H1 (cell line): ENCODE measurements at regions of chr16 and their contacts with region 1.

Region 1: DNA sequence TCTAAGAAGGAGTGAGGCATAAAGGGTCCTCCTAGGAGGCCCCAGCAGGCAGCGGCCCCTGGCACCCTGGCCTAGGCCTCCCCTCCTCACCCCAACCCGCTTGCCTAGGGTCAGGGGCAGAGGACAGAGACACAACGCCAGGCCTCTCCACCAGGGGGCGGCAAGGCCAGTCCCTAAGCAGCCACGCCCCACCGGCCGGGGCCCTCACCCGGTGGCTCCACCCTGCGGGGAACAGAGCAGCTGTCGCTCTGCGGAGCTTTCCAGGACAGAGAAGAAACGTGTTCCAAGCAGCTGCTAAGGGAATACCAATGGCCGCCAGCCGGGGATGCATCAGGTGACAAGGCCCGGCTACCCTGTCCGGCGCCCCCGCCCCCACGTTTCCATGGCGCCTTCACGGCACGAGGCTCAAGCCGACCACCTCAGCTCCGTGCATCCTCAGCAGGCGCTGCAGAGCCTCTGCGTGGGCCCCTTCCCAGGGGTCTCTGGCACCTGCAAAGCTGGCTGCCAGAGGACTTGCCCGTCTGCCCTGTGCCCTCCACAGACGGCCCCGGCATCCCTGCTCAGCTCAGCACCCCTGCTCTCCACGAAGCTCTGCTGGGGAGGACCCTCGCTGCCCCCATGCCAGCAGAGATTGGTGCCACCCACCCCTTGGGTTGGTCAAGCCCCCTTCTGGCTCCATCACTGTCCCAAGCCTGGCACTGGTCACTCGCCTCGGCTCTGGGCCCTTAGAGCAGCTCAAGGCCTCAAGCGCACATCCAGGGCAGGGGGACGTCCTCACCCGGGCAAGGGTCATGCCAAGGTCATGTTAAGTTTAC is 5.6 kb downstream of the ZNF598 start:
- DNase-seq: peak; percentile 90 to 99
- H3K4me3 ChIP-seq: peak overlapping the region in 2 of 4 experiments; percentile 14 to 33; a peak in 3 of 8 replicates
- H3K27ac ChIP-seq: peak overlapping the region; percentile 53; the same call in 1 of the 2 replicates
- H3K4me1 ChIP-seq: peaks cover 0 to 33% (median 18%) of the 10 kb centered on the region in 4 experiments; a peak in 5 of 7 replicates
- H3K27me3 ChIP-seq: no peaks in the 10 kb centered on the region
- CTCF ChIP-seq: peak in 2 of 3 experiments; percentile 98 to 99; a peak in 3 of 4 replicates
- EP300 ChIP-seq: peak in 1 of 2 experiments; percentile 12; a peak in 1 of 3 replicates
- POLR2A ChIP-seq: no peak
- RAD21 ChIP-seq: peak; percentile 55 to 62

Region 2: GRCh38 chr16:1991948-1992703 is 11.9 kb before region 1 on chr16:
- CTCF ChIA-PET with region 1: interaction called, 55 read pairs
- POLR2A ChIA-PET with region 1: interaction called, 15 read pairs
- DNase-seq: peak; percentile 85 to 98
- H3K4me3 ChIP-seq: peak overlapping the region; percentile 46 to 82 (median 48)
- H3K27ac ChIP-seq: peak overlapping the region; percentile 81; the same call in 1 of the 2 replicates
- H3K4me1 ChIP-seq: peaks cover 0 to 24% (median 18%) of the 10 kb centered on the region in 4 experiments; a peak in 6 of 7 replicates
- H3K27me3 ChIP-seq: peaks cover 4 to 37% (median 24%) of the 10 kb centered on the region in 4 experiments
- CTCF ChIP-seq: no peak
- EP300 ChIP-seq: no peak
- POLR2A ChIP-seq: peak in 1 of 2 experiments; percentile 88; a peak in 2 of 3 replicates
- RAD21 ChIP-seq: no peak

Region 3: DNA sequence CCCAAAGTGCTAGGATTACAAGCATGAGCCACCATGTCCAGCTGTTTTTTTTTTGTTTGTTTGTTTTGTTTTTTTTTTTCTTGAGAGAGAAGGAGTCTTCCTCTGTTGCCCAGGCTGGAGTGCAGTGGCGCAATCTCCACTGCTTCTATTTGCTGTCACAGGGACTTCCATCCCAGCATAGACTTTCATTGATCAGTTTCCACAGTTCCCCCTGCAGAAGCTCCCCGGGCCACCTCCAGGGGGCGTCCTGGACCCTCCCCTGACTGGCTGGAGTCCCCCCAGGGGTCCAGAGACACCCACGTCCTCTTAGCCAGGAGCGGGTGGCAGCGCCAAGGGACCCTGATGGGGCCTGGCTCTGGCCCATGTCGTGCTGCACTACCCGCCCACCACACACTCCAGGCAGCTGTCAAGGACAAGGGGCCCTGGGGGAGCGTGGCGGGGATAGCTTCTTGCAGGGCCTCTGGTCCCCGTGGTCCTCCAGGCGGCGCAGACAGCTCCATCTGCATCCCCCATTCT is 12.4 kb after region 1 on chr16:
- CTCF ChIA-PET with region 1: interaction called, 55 read pairs
- POLR2A ChIA-PET with region 1: interaction called, 7 read pairs
- DNase-seq: peak in 1 of 2 experiments; percentile 79
- H3K4me3 ChIP-seq: no peak overlapping the region
- H3K27ac ChIP-seq: no peak overlapping the region
- H3K4me1 ChIP-seq: peaks cover 0 to 15% (median 2%) of the 10 kb centered on the region in 4 experiments; a peak in 4 of 7 replicates
- H3K27me3 ChIP-seq: peaks cover 20 to 34% (median 26%) of the 10 kb centered on the region in 4 experiments
- CTCF ChIP-seq: peak; percentile 57 to 67 (median 58)
- EP300 ChIP-seq: no peak
- POLR2A ChIP-seq: no peak
- RAD21 ChIP-seq: peak; percentile 30 to 45; a peak in 3 of 4 replicates

Region 4: GRCh38 chr16:2023098-2023925 is 19.3 kb after region 1 on chr16:
- CTCF ChIA-PET with region 1: interaction called, 55 read pairs
- POLR2A ChIA-PET with region 1: interaction called, 7 read pairs
- DNase-seq: peak; percentile 71 to 100
- H3K4me3 ChIP-seq: peak overlapping the region; percentile 21 to 59 (median 32); a peak in 6 of 8 replicates
- H3K27ac ChIP-seq: no peak overlapping the region
- H3K4me1 ChIP-seq: peaks cover 0 to 27% (median 13%) of the 10 kb centered on the region in 4 experiments; a peak in 5 of 7 replicates
- H3K27me3 ChIP-seq: peaks cover 22 to 59% (median 52%) of the 10 kb centered on the region in 4 experiments
- CTCF ChIP-seq: peak in 2 of 3 experiments; percentile 92 to 99; a peak in 3 of 4 replicates
- EP300 ChIP-seq: no peak
- POLR2A ChIP-seq: no peak
- RAD21 ChIP-seq: peak; percentile 92 to 93

Region 5: DNA sequence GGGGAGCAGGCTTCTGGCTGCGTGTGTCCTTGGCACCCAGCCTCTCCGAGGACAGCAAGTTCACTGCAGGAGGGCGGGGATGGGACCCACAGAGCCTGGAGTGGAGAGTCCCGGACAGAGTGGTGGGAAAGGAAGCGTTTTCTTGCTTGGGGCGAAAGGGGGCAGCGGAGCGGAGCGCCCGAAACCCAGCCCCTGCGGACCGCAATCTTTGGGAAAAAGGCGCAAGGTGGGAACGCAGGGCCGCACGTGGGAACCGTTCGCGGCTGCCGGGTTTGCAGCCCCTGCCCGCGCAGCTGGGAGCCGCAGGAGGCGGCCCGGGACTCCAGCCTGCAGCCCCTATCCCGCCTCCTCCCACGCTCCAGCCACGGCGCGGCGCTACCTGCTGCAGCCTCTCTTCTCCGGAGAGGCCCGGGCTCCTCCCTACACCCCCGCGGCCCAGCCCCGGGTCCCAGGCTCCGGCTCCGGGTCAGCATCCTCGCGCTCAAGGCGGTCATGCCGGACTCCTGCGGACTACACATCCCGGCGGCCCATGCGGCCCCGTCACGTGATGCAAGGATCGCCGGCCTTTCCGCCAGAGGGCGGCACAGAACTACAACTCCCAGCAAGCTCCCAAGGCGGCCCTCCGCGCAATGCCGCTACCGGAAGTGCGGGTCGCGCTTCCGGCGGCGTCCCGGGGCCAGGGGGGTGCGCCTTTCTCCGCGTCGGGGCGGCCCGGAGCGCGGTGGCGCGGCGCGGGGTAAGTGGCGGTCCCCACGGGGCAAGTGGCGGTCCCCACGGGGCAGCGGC is 43.5 kb after region 1 on chr16 and contains the starts of genes NTHL1 and TSC2:
- CTCF ChIA-PET with region 1: interaction called, 13 read pairs
- POLR2A ChIA-PET with region 1: interaction called, 3 read pairs
- DNase-seq: peak; percentile 90 to 97
- H3K4me3 ChIP-seq: peak within 1 kb of the TSS; percentile 42 to 89 (median 86)
- H3K27ac ChIP-seq: no peak within 1 kb of the TSS
- H3K4me1 ChIP-seq: peaks cover 0 to 3% (median 1%) of the 10 kb centered on the region in 4 experiments; a peak in 3 of 7 replicates
- H3K27me3 ChIP-seq: no peaks in the 10 kb centered on the region; a peak in 1 of 7 replicates
- CTCF ChIP-seq: peak in 1 of 3 experiments; percentile 15; a peak in 1 of 4 replicates
- EP300 ChIP-seq: no peak
- POLR2A ChIP-seq: no peak
- RAD21 ChIP-seq: no peak; a peak in 1 of 4 replicates
- total RNA-seq, gene NTHL1: 70.9 and 84.5 TPM in 2 replicates
- total RNA-seq, gene TSC2: 91.1 and 96.6 TPM in 2 replicates

Region 6: DNA sequence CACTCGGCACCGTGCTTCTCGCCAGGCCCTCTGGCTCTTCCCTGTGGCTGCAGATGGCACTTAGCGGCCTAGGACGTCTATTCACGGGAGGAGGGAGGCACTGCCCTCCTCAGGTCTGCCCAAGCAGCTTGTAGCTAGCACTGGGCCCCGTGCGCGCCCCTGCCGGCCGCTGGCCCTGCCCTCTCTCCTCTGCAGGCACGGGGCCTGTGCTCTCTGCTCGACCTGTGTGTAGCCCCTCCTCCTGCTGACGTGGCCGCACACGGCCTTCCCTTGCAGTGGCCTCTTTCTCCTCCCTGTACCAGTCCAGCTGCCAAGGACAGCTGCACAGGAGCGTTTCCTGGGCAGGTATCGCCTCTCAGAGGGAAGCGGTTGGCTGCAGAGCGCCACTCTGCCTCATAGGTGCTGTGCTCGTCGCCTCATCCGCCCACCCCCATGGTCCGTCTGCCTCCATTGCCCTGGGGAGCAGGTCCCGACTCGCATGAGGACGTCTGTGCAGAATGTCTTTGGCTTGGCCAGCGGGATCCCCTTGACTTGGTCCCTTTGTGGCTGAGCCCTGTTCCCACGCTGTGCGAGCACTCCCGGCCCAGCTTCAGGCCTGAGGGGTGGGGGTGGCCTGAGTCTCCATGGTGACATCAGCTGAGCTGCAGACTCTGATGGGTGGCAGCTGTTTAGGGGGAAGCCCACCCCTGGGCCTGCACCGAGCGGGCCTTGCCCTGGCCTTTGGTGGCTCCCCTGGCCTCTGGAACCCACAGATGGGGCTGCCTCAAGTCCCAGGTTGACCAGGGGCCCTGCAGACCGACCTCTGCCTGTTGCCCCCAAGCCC is 78.3 kb after region 1 on chr16:
- CTCF ChIA-PET with region 1: interaction called, 14 read pairs
- POLR2A ChIA-PET with region 1: interaction called, 4 read pairs
- DNase-seq: no peak
- H3K4me3 ChIP-seq: no peak overlapping the region
- H3K27ac ChIP-seq: no peak overlapping the region
- H3K4me1 ChIP-seq: no peaks in the 10 kb centered on the region
- H3K27me3 ChIP-seq: no peaks in the 10 kb centered on the region
- CTCF ChIP-seq: no peak
- EP300 ChIP-seq: no peak
- POLR2A ChIP-seq: no peak
- RAD21 ChIP-seq: no peak

Region 7: GRCh38 chr16:2147981-2148671 is 144.1 kb after region 1 on chr16 and contains the start of gene RAB26:
- CTCF ChIA-PET with region 1: interaction called, 17 read pairs
- POLR2A ChIA-PET with region 1: interaction called, 36 read pairs
- DNase-seq: peak in 1 of 2 experiments; percentile 90
- H3K4me3 ChIP-seq: peak within 1 kb of the TSS; percentile 37 to 85 (median 48)
- H3K27ac ChIP-seq: no peak within 1 kb of the TSS
- H3K4me1 ChIP-seq: peaks cover 3 to 36% (median 27%) of the 10 kb centered on the region in 4 experiments
- H3K27me3 ChIP-seq: peaks cover 0 to 11% (median 5%) of the 10 kb centered on the region in 4 experiments; a peak in 3 of 7 replicates
- CTCF ChIP-seq: no peak
- EP300 ChIP-seq: no peak
- POLR2A ChIP-seq: no peak
- RAD21 ChIP-seq: no peak; a peak in 1 of 4 replicates
- total RNA-seq, gene RAB26: 4.3 and 5.3 TPM in 2 replicates